Activated CD4-positive, alpha-beta T cell treated with anti-CD3 and anti-CD28 coated beads for 36 hours (primary cell): ENCODE measurements at regions of chr17 and their contacts with region 1.

Region 1: DNA sequence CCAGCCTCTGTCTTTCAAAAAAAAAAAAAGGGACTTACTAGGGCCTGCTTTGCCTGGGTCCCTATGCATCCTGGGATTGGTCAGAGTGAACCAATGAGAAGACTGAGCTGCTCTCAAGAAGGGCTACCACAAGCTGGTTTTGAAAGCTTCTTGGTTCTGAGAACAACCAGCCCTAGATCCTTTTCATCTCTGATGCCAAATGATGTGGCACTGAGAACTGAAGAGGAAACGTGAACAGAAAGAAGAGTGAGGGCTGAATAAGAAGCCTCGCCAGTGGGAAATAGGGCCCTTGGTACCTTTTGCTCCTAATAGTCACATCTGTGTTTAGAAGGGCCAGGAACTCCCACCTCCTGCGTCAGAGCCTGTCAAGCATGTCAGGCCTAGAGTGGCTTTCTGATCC is 10.7 kb downstream of the TACO1 start:
- DNase-seq: peak; percentile 59
- ATAC-seq: peak; percentile 85
- H3K4me3 Mint-ChIP-seq: peak overlapping the region; percentile 51
- H3K27ac Mint-ChIP-seq: peak overlapping the region; percentile 91
- H3K4me1 Mint-ChIP-seq: peaks cover 27% of the 10 kb centered on the region
- H3K27me3 Mint-ChIP-seq: no peaks in the 10 kb centered on the region

Region 2: DNA sequence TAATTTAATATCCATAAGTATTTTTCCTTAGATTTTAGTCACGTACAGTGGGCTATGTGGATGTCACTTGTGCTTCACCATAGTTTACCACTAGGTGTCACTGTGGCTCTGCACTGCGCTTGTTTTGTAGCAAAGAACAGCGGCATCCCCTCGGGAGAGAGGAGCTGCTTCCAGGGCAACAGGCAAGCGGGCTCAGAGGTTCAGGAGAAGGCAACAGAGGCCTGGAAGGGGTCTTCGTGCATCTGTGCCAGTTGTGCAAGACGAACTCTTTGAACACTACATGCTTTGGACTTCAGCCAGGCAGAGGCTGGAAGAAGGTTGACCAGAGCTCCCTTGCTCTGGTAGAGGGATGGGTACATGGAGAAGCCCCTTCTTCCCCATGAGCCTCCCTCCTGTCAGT is 185.9 kb before region 1 on chr17:
- CTCF ChIA-PET with region 1: interaction called, 121 read pairs
- POLR2A ChIA-PET with region 1: interaction called, 6 read pairs
- intact Hi-C with region 1: loop called (anchors 1 kb)
- DNase-seq: peak; percentile 82
- ATAC-seq: peak; percentile 93
- H3K4me3 Mint-ChIP-seq: no peak overlapping the region
- H3K27ac Mint-ChIP-seq: no peak overlapping the region
- H3K4me1 Mint-ChIP-seq: peaks cover 27% of the 10 kb centered on the region
- H3K27me3 Mint-ChIP-seq: no peaks in the 10 kb centered on the region

Region 3: DNA sequence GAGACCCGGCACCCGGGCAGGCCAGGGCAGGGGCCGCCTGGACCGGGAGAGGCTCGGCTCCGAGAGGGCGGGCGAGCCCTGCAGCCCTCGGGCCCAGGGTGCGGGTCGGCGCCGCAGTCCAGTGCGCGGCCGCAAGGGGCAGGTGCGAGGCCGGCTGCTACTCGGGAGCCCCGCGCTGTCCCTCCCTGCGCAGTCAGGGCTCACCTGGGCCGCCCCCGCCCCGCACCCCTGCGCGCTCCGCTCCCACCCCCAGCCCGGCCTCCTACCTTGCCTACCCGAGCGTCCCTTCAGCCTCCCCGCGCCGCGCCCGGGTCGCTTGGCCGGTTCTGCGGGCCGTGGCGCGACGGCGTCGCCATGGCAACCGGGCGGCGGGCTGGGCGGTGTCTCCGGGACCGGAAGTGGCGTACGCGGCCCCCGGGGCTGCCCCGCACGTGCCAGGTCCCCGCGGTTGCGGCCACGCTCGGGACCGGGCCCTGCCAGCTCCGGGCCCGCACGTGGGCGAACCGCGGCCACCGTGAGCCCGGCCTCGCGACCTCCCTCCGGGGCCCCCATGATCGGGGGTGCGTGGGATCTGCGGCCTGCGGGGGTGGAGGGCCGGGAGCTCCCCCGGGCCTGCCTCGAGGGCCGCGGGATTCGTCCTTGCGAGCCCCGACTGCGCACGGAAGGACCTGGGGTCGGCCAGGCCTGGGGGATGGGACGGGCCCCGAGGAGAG is 165.2 kb before region 1 on chr17 and contains the start of gene CYB561:
- CTCF ChIA-PET with region 1: interaction called, 19 read pairs
- POLR2A ChIA-PET with region 1: no interaction called
- intact Hi-C with region 1: no loop called
- DNase-seq: peak; percentile 81
- ATAC-seq: peak; percentile 69
- H3K4me3 Mint-ChIP-seq: peak within 1 kb of the TSS; percentile 60
- H3K27ac Mint-ChIP-seq: peak within 1 kb of the TSS; percentile 72
- H3K4me1 Mint-ChIP-seq: peaks cover 23% of the 10 kb centered on the region
- H3K27me3 Mint-ChIP-seq: peaks cover 3% of the 10 kb centered on the region
- total RNA-seq, gene CYB561: 2.5 to 3.0 TPM

Region 4: GRCh38 chr17:63564562-63564961 is 46.8 kb before region 1 on chr17:
- CTCF ChIA-PET with region 1: interaction called, 11 read pairs
- POLR2A ChIA-PET with region 1: no interaction called
- intact Hi-C with region 1: no loop called
- DNase-seq: no peak
- ATAC-seq: no peak
- H3K4me3 Mint-ChIP-seq: no peak overlapping the region
- H3K27ac Mint-ChIP-seq: no peak overlapping the region
- H3K4me1 Mint-ChIP-seq: peaks cover 35% of the 10 kb centered on the region
- H3K27me3 Mint-ChIP-seq: no peaks in the 10 kb centered on the region

Region 5: GRCh38 chr17:63600569-63601438 is 10.6 kb before region 1 on chr17 and contains the start of gene TACO1:
- CTCF ChIA-PET with region 1: interaction called, 21 read pairs
- POLR2A ChIA-PET with region 1: interaction called, 5 read pairs
- intact Hi-C with region 1: no loop called
- DNase-seq: peak; percentile 87
- ATAC-seq: peak; percentile 94
- H3K4me3 Mint-ChIP-seq: peak within 1 kb of the TSS; percentile 97
- H3K27ac Mint-ChIP-seq: peak within 1 kb of the TSS; percentile 95
- H3K4me1 Mint-ChIP-seq: peaks cover 31% of the 10 kb centered on the region
- H3K27me3 Mint-ChIP-seq: no peaks in the 10 kb centered on the region
- total RNA-seq, gene TACO1: 25.7 to 29.2 TPM

Region 6: GRCh38 chr17:63709098-63709497 is 97.7 kb after region 1 on chr17:
- CTCF ChIA-PET with region 1: interaction called, 18 read pairs
- POLR2A ChIA-PET with region 1: interaction called, 5 read pairs
- intact Hi-C with region 1: no loop called
- DNase-seq: no peak
- ATAC-seq: no peak
- H3K4me3 Mint-ChIP-seq: no peak overlapping the region
- H3K27ac Mint-ChIP-seq: peak overlapping the region; percentile 44
- H3K4me1 Mint-ChIP-seq: peaks cover 52% of the 10 kb centered on the region
- H3K27me3 Mint-ChIP-seq: no peaks in the 10 kb centered on the region